Naive thymus-derived CD4-positive, alpha-beta T cell (primary cell): ENCODE measurements at regions of chr15 and their contacts with region 1.

Region 1: DNA sequence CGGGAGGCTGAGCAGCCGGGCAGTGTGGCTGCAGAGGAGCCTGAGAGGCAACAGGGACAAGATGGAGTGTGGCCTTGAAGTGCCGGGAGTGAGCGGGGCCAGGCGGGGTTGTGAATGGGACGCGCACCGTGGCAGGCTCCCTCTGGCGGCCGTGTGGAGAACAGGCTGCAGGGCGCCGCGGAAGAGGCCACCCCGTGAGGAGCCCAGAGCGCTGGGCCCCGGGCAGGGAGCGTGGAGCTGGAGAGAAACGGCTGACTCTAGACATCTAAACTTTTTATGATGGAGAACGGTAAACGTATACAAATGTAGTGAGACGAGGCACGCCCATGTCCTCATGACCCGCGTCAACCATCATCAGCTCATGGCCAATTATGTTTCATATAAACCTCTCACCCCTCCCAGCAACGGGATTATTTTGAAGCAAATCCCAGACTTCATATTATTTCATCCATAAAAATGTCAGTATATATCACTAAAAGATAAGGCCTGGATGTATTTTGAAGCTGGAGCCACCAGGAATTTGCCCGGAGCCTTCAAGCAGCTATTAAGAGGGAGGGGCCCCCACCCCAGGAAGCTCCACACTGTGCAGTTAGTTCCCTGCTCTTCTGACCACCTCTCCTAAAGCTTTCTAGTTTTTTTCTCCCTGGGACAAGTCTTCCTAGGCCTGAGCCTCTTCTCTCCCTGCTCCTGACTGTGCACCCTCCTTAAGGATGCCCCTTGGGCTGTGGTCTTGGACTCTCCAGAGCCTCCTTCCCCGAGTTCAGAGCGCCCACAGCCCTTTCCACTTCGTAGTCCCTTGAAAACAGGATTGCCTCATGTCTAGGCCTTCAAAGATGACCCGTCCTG is 149.4 kb downstream of the SMAD6 start:
- DNase-seq: peak; percentile 33 to 78 (median 67)
- ATAC-seq: peak; percentile 96
- H3K4me3 ChIP-seq: no peak overlapping the region
- H3K4me3 Mint-ChIP-seq: peak overlapping the region in 9 of 10 donors; percentile 26 to 79 (median 59)
- H3K27ac ChIP-seq: no peak overlapping the region
- H3K27ac Mint-ChIP-seq: peak overlapping the region in 1 of 9 donors; percentile 21
- H3K4me1 ChIP-seq: no peaks in the 10 kb centered on the region
- H3K4me1 Mint-ChIP-seq: peaks cover 5 to 12% (median 8%) of the 10 kb centered on the region in 7 donors
- H3K27me3 ChIP-seq: no peaks in the 10 kb centered on the region
- H3K27me3 Mint-ChIP-seq: peaks cover 11 to 23% (median 17%) of the 10 kb centered on the region in 5 donors

Region 2: DNA sequence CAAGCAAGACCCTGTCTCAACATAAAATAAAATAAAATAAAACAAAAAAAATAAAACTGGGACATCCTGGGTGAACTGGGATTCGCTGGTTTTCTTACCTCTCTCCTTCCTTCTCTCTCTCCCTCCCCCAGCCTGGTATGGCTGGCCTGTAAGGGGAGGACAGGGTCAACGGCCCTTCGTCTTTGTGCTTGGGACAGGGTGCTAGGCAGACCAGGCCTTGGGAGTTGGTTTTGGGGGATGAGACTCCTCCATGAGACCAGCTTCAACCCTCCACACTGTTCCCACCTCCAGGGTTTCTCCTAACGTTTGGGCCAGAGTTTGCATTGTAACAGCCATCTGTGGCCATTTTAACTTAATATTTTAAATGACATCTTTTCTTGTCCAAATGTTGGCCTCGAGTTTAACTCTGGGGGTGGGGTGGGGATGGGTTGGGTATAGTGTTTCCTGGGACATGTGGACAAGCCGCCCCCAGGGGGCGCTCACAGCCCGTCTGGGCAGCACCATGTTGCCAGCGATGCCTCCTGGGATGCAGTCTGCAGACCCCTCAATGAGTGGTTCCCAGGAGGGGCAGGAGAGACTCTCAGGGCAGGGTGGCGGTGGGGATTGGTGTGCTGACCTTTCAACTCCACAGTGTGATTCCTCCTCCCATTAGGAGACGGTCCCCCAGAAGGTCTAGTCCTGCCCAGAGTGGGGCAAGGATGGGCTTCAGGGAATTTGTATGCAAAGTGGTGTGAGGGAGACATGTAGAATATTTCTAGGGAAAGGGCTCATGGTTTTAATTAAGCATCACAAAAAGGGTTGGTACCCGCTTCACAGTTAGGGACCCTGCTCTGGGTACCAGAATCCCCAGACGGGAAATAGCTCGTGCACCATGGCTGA is 247.9 kb before region 1 on chr15:
- CTCF ChIA-PET with region 1: interaction called, 11 read pairs
- POLR2A ChIA-PET with region 1: no interaction called
- intact Hi-C with region 1: loop called in 1 of 2 experiments (anchors 1 kb)
- DNase-seq: peak; percentile 22 to 72 (median 60)
- ATAC-seq: peak; percentile 75
- H3K4me3 ChIP-seq: no peak overlapping the region
- H3K4me3 Mint-ChIP-seq: no peak overlapping the region
- H3K27ac ChIP-seq: no peak overlapping the region
- H3K27ac Mint-ChIP-seq: no peak overlapping the region
- H3K4me1 ChIP-seq: no peaks in the 10 kb centered on the region
- H3K4me1 Mint-ChIP-seq: peaks cover under 1 to 2% (median under 1%) of the 10 kb centered on the region in 7 donors
- H3K27me3 ChIP-seq: no peaks in the 10 kb centered on the region
- H3K27me3 Mint-ChIP-seq: peaks cover 0 to 5% (median 4%) of the 10 kb centered on the region in 5 donors

Region 3: DNA sequence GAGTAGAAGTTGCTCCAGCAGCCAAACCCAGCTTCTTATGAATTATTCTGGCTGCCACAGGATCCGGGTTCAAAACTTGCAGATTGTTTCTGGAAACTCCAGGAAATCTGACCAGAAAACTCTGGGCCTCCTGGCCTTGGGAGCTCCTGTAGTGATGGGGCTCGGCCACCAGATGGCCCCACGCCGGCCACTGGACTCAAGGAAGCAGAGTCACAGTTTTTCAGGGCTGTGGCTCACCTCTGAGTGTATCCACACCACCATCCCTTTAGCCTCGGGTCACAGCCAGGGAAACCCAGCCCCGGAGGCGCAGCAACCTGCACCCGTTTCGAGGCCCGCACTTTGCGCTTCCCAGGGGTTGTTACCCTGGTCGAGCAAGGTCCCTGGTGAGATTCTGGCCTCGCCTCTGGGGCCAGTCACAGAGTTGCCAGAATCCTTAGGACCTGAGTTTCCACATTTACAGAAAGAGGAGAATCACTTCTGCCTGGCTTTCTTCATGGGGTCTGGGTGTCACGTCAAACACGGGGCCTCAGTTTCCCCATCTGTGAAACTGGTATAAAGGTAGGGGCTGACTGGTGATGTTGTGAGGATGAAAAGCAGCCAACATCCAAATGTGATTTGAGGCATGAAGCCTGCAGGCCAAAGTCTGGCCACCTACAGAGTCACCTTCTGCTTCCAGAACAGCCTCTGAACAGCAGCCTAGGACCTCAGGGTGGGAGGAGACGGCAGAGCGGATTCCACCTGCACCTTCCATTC is 232.1 kb before region 1 on chr15:
- CTCF ChIA-PET with region 1: interaction called, 12 read pairs
- POLR2A ChIA-PET with region 1: no interaction called
- intact Hi-C with region 1: loop called (anchors 1 kb)
- DNase-seq: peak in 8 of 9 donors; percentile 3 to 56 (median 32)
- ATAC-seq: peak; percentile 56
- H3K4me3 ChIP-seq: no peak overlapping the region
- H3K4me3 Mint-ChIP-seq: no peak overlapping the region
- H3K27ac ChIP-seq: no peak overlapping the region
- H3K27ac Mint-ChIP-seq: no peak overlapping the region
- H3K4me1 ChIP-seq: no peaks in the 10 kb centered on the region
- H3K4me1 Mint-ChIP-seq: peaks cover 0 to 21% (median 5%) of the 10 kb centered on the region in 7 donors
- H3K27me3 ChIP-seq: peaks cover 0 to 15% of the 10 kb centered on the region in 2 donors
- H3K27me3 Mint-ChIP-seq: peaks cover 23 to 33% (median 32%) of the 10 kb centered on the region in 5 donors

Region 4: GRCh38 chr15:66838671-66839239 is 12.7 kb before region 1 on chr15:
- CTCF ChIA-PET with region 1: interaction called, 4 read pairs
- POLR2A ChIA-PET with region 1: no interaction called
- intact Hi-C with region 1: loop called in 1 of 2 experiments (anchors 1 kb)
- DNase-seq: no peak
- ATAC-seq: no peak
- H3K4me3 ChIP-seq: no peak overlapping the region
- H3K4me3 Mint-ChIP-seq: no peak overlapping the region
- H3K27ac ChIP-seq: no peak overlapping the region
- H3K27ac Mint-ChIP-seq: no peak overlapping the region
- H3K4me1 ChIP-seq: no peaks in the 10 kb centered on the region
- H3K4me1 Mint-ChIP-seq: peaks cover 0 to 14% (median 5%) of the 10 kb centered on the region in 7 donors
- H3K27me3 ChIP-seq: peaks cover 5 to 12% of the 10 kb centered on the region in 2 donors
- H3K27me3 Mint-ChIP-seq: peaks cover 21 to 32% (median 23%) of the 10 kb centered on the region in 5 donors

Region 5: GRCh38 chr15:67048281-67049279 is 197.1 kb after region 1 on chr15:
- CTCF ChIA-PET with region 1: no interaction called
- POLR2A ChIA-PET with region 1: no interaction called
- intact Hi-C with region 1: no loop called
- DNase-seq: no peak
- ATAC-seq: peak; percentile 60
- H3K4me3 ChIP-seq: no peak overlapping the region
- H3K4me3 Mint-ChIP-seq: no peak overlapping the region
- H3K27ac ChIP-seq: no peak overlapping the region
- H3K27ac Mint-ChIP-seq: no peak overlapping the region
- H3K4me1 ChIP-seq: no peaks in the 10 kb centered on the region
- H3K4me1 Mint-ChIP-seq: peaks cover 10 to 28% (median 11%) of the 10 kb centered on the region in 7 donors
- H3K27me3 ChIP-seq: no peaks in the 10 kb centered on the region
- H3K27me3 Mint-ChIP-seq: no peaks in the 10 kb centered on the region